ENCODE measurements at regions of chr5 and their contacts with region 1.

Region 1: DNA sequence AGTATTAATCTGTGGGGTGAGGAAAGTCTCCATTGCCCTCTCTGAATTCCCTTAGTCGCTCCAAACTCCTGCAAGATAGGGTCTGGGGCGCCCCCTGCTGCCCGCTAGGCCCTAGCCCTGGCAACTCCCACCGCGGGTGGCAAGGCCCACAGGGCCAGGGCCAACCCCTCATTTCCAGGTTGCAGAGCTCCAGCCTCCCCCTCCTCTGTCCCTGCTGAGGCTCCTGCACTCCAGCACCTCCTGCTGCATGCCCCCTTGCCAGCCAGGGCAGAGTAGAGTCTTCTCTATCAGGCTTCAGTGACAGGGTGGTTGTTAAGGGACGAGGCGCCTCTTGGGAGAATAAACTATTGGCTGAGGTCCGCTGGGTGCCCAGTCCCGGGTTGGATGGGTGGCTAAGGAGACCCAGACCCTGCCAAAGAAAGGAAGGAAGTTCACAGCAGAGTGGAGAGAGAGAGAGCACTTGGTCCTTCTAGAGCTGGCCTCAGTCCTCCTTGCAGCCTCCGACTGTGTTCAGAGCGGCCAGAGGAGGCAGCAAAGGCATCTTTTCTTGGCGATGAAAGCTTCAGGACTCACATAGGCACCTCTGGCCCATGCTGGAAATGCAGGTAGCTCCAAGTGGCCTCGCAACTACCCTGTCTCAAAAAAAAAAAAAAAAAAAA is 45.6 kb downstream of the SAR1B start:
- DNase-seq: peak; percentile 88
- H3K4me3 ChIP-seq: no peak overlapping the region
- H3K27ac ChIP-seq: no peak overlapping the region
- H3K4me1 ChIP-seq: peaks cover 5% of the 10 kb centered on the region
- H3K27me3 ChIP-seq: no peaks in the 10 kb centered on the region
- CTCF ChIP-seq: peak; percentile 10 to 79 (median 64)
- POLR2A ChIP-seq: no peak

Region 2: GRCh38 chr5:134225618-134226440 is 361.2 kb before region 1 on chr5 and contains the start of gene PPP2CA:
- intact Hi-C with region 1: no loop called
- DNase-seq: peak; percentile 98
- H3K4me3 ChIP-seq: peak within 1 kb of the TSS; percentile 85 to 98
- H3K27ac ChIP-seq: peak within 1 kb of the TSS; percentile 97 to 100
- H3K4me1 ChIP-seq: peaks cover 19% of the 10 kb centered on the region
- H3K27me3 ChIP-seq: no peaks in the 10 kb centered on the region
- CTCF ChIP-seq: no peak
- POLR2A ChIP-seq: peak; percentile 81
- total RNA-seq, gene PPP2CA: 125 to 214 TPM

Region 3: DNA sequence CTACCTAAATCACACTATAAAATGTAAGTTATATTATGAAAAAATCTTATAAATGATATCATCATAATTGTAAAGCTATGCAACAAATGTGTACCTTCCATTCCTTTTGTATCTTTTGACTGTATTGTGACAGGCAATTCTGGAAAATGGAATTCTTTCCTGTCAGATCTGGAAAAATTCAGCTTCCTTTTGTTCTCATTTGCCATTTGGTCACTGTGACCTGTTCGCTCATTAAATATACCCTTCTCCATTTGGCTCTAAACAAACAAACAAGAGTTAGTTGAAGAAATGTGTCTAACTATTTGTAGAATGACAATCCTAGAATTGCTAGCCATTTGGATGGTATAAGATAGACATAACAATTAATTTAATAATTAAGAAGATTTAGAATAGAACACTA is 282.7 kb before region 1 on chr5:
- intact Hi-C with region 1: loop called (anchors 10 kb)
- DNase-seq: no peak
- H3K4me3 ChIP-seq: no peak overlapping the region
- H3K27ac ChIP-seq: no peak overlapping the region
- H3K4me1 ChIP-seq: no peaks in the 10 kb centered on the region
- H3K27me3 ChIP-seq: no peaks in the 10 kb centered on the region
- CTCF ChIP-seq: no peak
- POLR2A ChIP-seq: no peak

Region 4: GRCh38 chr5:134603059-134603458 is 16.1 kb after region 1 on chr5:
- intact Hi-C with region 1: no loop called
- DNase-seq: no peak
- H3K4me3 ChIP-seq: no peak overlapping the region
- H3K27ac ChIP-seq: no peak overlapping the region
- H3K4me1 ChIP-seq: no peaks in the 10 kb centered on the region
- H3K27me3 ChIP-seq: no peaks in the 10 kb centered on the region
- CTCF ChIP-seq: no peak
- POLR2A ChIP-seq: no peak

Measured in testis (tissue), 5 donors.